ENCODE measurements at regions of chr1 and their contacts with region 1.

Region 1: DNA sequence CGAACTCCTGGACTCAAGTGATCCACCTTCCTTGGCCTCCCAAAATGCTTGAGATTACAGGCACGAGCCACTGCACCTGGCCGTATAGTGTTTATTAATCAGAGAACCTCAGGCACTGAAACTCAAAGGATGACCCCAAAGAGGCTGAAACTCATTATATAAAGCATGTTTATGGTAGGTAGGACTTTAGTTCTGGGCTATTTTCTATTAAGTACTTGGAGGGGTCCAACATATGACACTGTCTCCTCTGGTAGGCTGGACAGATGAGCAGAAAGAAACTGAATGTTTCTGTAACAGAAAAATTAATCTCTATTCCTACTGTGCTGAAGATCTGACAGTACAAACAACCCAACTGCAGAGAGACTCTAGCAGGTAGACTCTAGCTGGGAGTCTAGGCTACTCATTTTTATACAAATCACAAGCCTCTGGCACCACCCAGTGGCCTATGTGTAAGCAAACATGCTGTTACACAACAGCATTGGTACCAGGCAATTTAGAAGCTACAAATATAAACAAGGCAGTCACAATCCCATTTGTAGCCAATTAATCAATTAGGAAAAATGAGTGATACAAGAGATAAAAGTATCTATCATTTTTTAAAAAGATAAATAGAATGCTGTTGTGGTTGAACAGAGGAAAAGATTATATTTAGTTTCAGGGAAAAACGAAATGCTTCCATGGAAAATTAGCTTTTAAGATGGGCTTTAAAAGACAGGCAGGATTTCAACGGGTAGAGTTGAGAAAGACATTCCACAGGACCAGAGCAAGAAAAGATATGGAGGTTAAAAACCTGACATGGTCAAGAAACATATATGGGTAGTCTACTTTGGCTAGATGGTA is 10.4 kb downstream of the DCAF8 start:
- DNase-seq: peak; percentile 81
- ATAC-seq: peak; percentile 98
- H3K4me3 ChIP-seq: no peak overlapping the region
- H3K27ac ChIP-seq: peak overlapping the region; percentile 22
- H3K4me1 ChIP-seq: peaks cover 23% of the 10 kb centered on the region
- H3K27me3 ChIP-seq: no peaks in the 10 kb centered on the region
- CTCF ChIP-seq: peak; percentile 83
- EP300 ChIP-seq: no peak
- POLR2A ChIP-seq: no peak
- RAD21 ChIP-seq: peak; percentile 78

Region 2: DNA sequence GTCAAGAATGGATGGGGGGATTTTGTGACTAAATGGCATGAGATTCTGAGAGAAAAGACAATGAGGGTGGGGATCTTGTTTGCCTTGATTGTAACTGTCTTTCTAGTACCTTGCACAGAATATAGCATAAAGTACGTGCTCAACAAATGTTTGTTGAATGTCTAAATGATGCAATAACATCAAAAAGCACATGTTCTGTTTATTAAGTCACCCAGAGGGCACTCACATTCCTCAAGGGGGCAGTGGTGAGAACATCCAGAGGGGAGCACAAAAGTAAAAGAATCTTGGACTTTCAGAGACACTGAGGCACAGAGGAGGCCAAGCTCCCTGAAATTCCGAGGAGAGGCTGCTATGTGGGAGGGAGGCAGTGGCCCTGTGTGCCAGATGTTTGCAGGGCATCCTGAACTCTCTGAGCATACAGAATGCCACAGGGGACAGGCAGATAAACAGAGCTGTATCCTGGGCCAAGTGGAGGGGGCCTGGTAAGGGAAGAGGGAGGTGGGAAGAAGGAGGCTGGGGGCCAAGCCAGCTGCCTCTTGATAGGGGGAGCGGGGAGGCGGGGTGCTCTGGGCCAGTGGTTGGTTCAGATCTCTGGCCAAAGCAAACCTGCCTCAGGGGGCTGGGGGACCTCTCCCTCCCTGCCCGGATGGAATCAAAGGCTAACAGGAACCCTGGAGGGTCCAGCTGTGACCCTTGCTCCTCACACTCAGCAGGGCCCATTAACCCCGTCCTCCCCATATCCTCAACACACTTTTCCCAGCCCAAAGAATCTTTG is 142.8 kb before region 1 on chr1:
- CTCF ChIA-PET with region 1: no interaction called
- POLR2A ChIA-PET with region 1: no interaction called
- in situ Hi-C with region 1: no loop called
- intact Hi-C with region 1: loop called (anchors 2 kb)
- DNase-seq: peak; percentile 80
- ATAC-seq: peak; percentile 77
- H3K4me3 ChIP-seq: peak overlapping the region in 2 of 3 experiments; percentile 19 to 38; a peak in 2 of 6 replicates
- H3K27ac ChIP-seq: peak overlapping the region; percentile 70
- H3K4me1 ChIP-seq: peaks cover 75% of the 10 kb centered on the region
- H3K27me3 ChIP-seq: no peaks in the 10 kb centered on the region
- CTCF ChIP-seq: peak; percentile 52
- EP300 ChIP-seq: peak in 1 of 2 experiments; percentile 59; a peak in 1 of 4 replicates
- POLR2A ChIP-seq: no peak
- RAD21 ChIP-seq: 0 out of 2 replicates have a peak, but pooled peaks have one; percentile 12

Region 3: GRCh38 chr1:160161965-160162705 is 89.8 kb before region 1 on chr1:
- CTCF ChIA-PET with region 1: no interaction called
- POLR2A ChIA-PET with region 1: no interaction called
- in situ Hi-C with region 1: no loop called
- intact Hi-C with region 1: loop called (anchors 1 kb)
- DNase-seq: peak; percentile 53
- ATAC-seq: peak; percentile 94
- H3K4me3 ChIP-seq: no peak overlapping the region
- H3K27ac ChIP-seq: no peak overlapping the region
- H3K4me1 ChIP-seq: peaks cover 39% of the 10 kb centered on the region
- H3K27me3 ChIP-seq: peaks cover 0 to 8% of the 10 kb centered on the region in 2 experiments; a peak in 4 of 5 replicates
- CTCF ChIP-seq: peak; percentile 74
- EP300 ChIP-seq: no peak
- POLR2A ChIP-seq: no peak
- RAD21 ChIP-seq: peak; percentile 58

Region 4: GRCh38 chr1:160193091-160193819 is 58.7 kb before region 1 on chr1:
- CTCF ChIA-PET with region 1: interaction called, 12 read pairs
- POLR2A ChIA-PET with region 1: interaction called, 3 read pairs
- in situ Hi-C with region 1: loop called (anchors 5 kb)
- intact Hi-C with region 1: loop called (anchors 1 kb)
- DNase-seq: peak; percentile 85
- ATAC-seq: peak; percentile 88
- H3K4me3 ChIP-seq: peak overlapping the region; percentile 47 to 70 (median 55)
- H3K27ac ChIP-seq: peak overlapping the region; percentile 53
- H3K4me1 ChIP-seq: peaks cover 34% of the 10 kb centered on the region
- H3K27me3 ChIP-seq: peaks cover 1 to 21% of the 10 kb centered on the region in 2 experiments; a peak in 3 of 5 replicates
- CTCF ChIP-seq: peak; percentile 95
- EP300 ChIP-seq: peak in 1 of 2 experiments; percentile 24; a peak in 1 of 4 replicates
- POLR2A ChIP-seq: no peak
- RAD21 ChIP-seq: peak; percentile 95

Region 5: GRCh38 chr1:160219062-160219929 is 32.6 kb before region 1 on chr1:
- CTCF ChIA-PET with region 1: no interaction called
- POLR2A ChIA-PET with region 1: no interaction called
- in situ Hi-C with region 1: no loop called
- intact Hi-C with region 1: loop called (anchors 5 kb)
- DNase-seq: peak; percentile 45
- ATAC-seq: peak; percentile 86
- H3K4me3 ChIP-seq: no peak overlapping the region
- H3K27ac ChIP-seq: no peak overlapping the region
- H3K4me1 ChIP-seq: peaks cover 16% of the 10 kb centered on the region
- H3K27me3 ChIP-seq: no peaks in the 10 kb centered on the region
- CTCF ChIP-seq: peak; percentile 72
- EP300 ChIP-seq: no peak
- POLR2A ChIP-seq: no peak
- RAD21 ChIP-seq: 0 out of 2 replicates have a peak, but pooled peaks have one; percentile 52

Region 6: GRCh38 chr1:160261893-160262794 is 10.2 kb after region 1 on chr1 and contains the start of gene DCAF8:
- CTCF ChIA-PET with region 1: no interaction called
- POLR2A ChIA-PET with region 1: interaction called, 42 read pairs
- in situ Hi-C with region 1: no loop called
- intact Hi-C with region 1: no loop called
- DNase-seq: peak; percentile 94
- ATAC-seq: peak; percentile 94
- H3K4me3 ChIP-seq: peak within 1 kb of the TSS; percentile 79 to 100 (median 100)
- H3K27ac ChIP-seq: peak within 1 kb of the TSS; percentile 95
- H3K4me1 ChIP-seq: peaks cover 49% of the 10 kb centered on the region
- H3K27me3 ChIP-seq: no peaks in the 10 kb centered on the region; a peak in 1 of 5 replicates
- CTCF ChIP-seq: peak; percentile 15; the same call in 1 of the 2 replicates
- EP300 ChIP-seq: 0 out of 4 replicates have a peak, but pooled peaks of 1 of the 2 experiments have one; percentile 7
- POLR2A ChIP-seq: peak; percentile 92 to 94
- RAD21 ChIP-seq: peak; percentile 33; the same call in 1 of the 2 replicates
- total RNA-seq, gene DCAF8: 52.3 and 79.8 TPM in 2 replicates